AG04449 (cell line): ENCODE measurements at regions of chr16 and their contacts with region 1.

Region 1: DNA sequence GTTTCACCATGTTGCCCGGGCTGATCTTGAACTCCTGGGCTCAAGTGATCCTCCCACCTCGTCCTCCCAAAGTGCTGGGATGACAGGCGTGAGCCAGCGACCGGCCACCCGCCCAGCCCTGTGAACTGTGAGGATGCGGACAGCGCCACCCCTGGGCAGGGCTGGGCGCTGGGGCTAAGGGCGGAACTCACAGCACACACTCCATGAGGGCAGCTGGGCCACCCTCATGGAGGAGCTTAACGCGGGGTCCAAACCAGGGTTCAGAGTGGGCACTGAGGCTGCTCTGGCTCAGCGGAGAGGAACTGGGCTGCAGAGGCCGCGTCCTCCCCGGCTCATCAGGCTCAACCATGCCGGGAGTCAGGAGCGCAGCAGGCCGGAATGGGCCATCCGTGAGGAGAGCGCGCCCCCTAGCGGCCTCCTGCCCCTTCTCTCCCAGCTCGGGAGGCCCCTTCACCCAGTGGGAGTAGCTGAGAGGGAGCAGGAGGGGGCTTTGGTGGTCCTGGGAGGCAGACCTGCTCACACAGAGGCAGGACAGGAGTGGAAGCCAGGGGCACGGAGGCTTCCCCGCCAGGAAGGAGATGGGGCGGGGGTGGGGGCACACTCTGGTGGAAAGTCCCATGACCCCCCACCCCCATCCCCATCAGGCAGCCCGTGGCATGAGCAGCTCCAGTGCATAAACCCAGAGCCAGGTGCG is 13.8 kb downstream of the CORO7 start:
- DNase-seq: no peak
- H3K4me3 ChIP-seq: peak overlapping the region; percentile 15
- CTCF ChIP-seq: peak; percentile 90

Region 2: GRCh38 chr16:4261557-4262172 is 140.9 kb before region 1 on chr16:
- CTCF ChIA-PET with region 1: interaction called, 22 read pairs
- POLR2A ChIA-PET with region 1: no interaction called
- DNase-seq: no peak
- H3K4me3 ChIP-seq: no peak overlapping the region
- CTCF ChIP-seq: peak; percentile 67

Region 3: GRCh38 chr16:4293822-4294457 is 108.6 kb before region 1 on chr16:
- CTCF ChIA-PET with region 1: interaction called, 24 read pairs
- POLR2A ChIA-PET with region 1: no interaction called
- DNase-seq: no peak
- H3K4me3 ChIP-seq: peak overlapping the region; percentile 43
- CTCF ChIP-seq: no peak

Region 4: DNA sequence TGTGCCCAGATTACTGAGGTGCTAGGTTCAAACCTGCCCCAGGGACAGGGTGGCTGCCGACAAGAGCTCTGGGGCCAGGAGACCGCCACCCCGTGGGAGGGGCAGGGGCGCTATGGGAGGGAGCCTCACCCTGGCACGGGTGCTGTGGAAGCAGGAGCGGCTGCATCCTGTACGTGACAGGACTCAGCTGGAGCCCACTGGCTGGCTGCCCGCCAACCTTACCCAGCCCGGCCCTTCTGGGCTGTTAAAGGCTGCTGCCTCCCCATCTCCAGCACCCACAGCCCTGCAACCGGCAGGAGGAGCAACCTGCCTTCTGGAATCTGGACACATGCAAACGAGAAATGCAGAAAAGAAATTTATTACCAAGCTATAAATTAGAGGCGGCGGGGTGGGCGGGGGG is 62.7 kb before region 1 on chr16:
- CTCF ChIA-PET with region 1: interaction called, 213 read pairs
- POLR2A ChIA-PET with region 1: no interaction called
- DNase-seq: no peak
- H3K4me3 ChIP-seq: no peak overlapping the region
- CTCF ChIP-seq: no peak

Region 5: DNA sequence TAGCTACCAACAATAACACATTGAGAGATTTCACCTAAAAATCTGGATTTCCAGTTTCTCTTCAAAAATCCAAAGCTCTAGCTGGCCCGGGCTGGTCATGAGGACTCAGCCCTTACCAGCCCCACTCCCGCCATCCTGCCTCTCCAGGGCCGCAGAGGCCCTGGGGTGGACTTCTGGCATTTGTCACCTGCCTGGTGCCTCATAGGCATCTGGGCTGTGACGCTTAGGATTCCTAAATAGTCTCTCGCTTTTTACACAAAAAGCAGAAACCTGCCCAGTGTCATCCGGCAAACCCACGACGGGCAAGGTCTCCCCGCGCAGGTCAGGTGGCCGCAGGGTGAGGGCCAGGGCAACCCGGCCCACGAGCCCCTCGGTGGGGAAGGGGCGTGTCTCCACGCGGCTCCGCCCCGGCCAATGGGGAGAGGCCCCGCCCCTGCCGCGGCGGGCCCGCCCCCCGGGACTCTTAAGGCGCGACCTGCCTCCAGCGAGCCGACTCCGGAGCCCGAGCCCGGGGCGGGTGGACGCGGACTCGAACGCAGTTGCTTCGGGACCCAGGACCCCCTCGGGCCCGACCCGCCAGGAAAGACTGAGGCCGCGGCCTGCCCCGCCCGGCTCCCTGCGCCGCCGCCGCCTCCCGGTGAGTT is 31.1 kb before region 1 on chr16 and contains the start of gene VASN:
- CTCF ChIA-PET with region 1: interaction called, 389 read pairs
- POLR2A ChIA-PET with region 1: interaction called, 10 read pairs
- DNase-seq: no peak
- H3K4me3 ChIP-seq: peak within 1 kb of the TSS; percentile 93
- CTCF ChIP-seq: no peak